ENCODE measurements at regions of chr3 and their contacts with region 1.

Region 1: DNA sequence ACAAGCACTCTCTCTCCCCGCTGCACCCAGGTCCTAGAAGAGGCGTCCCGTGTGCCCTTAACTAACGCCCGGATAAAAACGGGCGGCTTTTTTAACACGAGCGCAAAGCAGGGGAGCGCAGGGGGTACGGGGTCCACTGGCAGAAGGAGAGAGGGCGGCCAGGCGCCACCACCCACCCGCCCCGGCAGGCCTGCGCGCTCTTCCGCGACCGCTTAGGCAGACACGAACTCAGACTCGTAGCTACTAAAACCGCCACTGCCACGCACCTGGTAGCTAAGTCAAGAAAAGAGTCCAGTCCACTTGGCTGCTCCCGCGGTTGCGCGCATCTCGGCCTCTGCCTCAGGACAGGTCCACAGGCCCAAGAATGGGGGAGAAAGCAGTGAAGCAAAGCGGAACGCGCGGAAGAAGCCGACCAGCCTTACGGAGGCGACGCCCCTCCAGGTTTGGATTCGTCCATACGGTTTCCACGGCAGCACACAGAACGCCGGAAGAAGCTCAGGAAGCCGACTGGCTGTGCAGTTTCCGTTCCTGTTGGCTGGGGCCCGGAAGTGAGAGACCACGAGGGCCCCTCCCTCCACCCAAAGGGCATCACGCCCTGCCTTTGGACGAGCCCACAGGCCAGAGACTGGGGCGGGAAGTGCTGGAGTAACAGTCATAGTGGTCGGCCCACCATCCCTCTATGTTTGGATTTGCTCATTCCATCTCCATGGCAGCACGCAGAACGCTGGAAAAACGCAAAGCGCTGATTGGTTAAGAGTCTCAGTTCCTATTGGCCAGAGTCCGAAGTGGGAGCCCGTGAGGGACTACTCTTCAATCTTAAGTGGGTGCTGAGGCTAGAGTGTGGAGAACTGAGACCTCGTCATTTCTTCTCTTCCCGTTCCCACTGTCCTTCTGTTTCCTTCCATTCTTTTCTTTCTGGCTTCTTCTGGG is at the start of gene ULK4:
- DNase-seq: peak; percentile 87 to 99 (median 92)
- ATAC-seq: peak; percentile 83
- H3K4me3 ChIP-seq: peak within 1 kb of the TSS; percentile 100
- H3K4me3 Mint-ChIP-seq: peak within 1 kb of the TSS; percentile 100
- H3K27ac ChIP-seq: peak within 1 kb of the TSS; percentile 86 to 97
- H3K27ac Mint-ChIP-seq: peak within 1 kb of the TSS; percentile 98
- H3K4me1 ChIP-seq: peaks cover 19% of the 10 kb centered on the region
- H3K4me1 Mint-ChIP-seq: peaks cover 26% of the 10 kb centered on the region
- H3K27me3 ChIP-seq: no peaks in the 10 kb centered on the region
- H3K27me3 Mint-ChIP-seq: no peaks in the 10 kb centered on the region
- CTCF ChIP-seq: no peak
- total RNA-seq, gene ULK4: 23.8 to 28.6 TPM

Region 2: DNA sequence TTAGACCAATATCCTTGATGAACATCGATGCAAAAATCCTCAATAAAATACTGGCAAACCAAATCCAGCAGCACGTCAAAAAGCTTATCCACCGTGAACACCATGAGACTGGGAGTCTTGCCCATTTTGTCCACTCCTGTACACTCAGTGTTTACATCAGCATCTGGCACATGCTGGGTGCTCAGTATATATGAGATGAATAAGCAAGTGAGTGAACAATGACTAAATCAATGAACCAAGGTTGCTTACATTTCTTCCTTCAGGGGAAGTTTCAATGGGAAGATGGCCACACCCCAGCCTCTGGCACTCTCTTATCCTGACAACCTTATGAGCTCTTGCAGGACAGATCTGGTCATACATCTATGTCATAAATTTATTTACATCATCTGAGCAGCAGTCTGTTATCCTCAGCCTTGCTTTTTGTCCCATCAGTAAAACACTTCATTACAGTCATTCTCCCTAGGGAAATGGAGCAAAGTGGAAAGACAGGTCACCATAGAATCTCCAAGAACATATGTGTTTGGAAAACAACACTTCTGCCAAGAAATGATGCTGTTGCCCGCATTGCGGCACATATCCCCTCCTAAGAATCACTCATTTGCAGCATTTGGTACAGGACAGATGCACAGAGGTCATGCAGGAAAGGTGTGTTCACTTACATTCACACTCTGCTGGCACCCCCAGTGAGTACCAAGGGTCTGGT is 1824.3 kb before region 1 on chr3:
- CTCF ChIA-PET with region 1: no interaction called
- POLR2A ChIA-PET with region 1: no interaction called
- intact Hi-C with region 1: no loop called
- DNase-seq: no peak
- ATAC-seq: no peak
- H3K4me3 ChIP-seq: no peak overlapping the region
- H3K4me3 Mint-ChIP-seq: no peak overlapping the region
- H3K27ac ChIP-seq: no peak overlapping the region
- H3K27ac Mint-ChIP-seq: no peak overlapping the region
- H3K4me1 ChIP-seq: no peaks in the 10 kb centered on the region
- H3K4me1 Mint-ChIP-seq: no peaks in the 10 kb centered on the region
- H3K27me3 ChIP-seq: no peaks in the 10 kb centered on the region
- H3K27me3 Mint-ChIP-seq: peaks cover 13% of the 10 kb centered on the region
- CTCF ChIP-seq: no peak

Region 3: DNA sequence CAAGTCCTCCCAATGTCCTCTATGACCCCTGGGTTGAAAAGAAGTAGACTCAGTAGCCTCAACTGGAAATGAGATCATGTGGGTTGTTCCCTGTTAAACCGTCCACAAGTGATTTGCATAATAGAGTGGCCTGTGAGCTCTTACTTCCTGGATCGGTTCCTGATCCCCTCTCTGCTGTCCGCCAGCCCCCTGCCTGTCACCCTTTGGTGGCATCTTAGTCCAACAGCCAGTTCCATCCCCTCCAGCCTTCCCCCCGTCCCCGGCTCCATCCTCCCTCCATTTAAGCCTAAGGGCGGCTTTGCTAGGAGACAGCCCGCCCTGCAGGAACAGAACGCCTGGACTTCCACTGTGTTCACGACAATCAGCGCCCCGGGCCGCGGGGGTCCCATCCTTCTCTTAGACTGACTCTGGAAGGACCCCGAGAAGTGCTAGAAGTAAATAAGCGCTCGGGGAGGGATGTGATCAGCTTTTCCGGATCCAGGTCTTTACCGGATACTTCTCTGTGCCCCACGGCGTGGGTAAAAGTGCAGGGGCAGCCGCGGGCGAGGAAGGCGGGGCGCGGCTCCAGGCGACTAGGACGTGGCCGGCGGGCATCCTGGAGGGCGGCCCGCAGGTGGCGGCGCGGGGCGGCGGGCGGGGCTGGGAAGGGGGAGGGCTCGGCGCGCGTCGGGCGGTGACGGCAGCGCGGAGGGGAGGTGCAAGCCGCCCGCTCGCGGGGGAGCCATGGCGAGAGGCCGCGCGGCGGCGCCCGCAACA is 51.1 kb after region 1 on chr3:
- CTCF ChIA-PET with region 1: interaction called, 3 read pairs
- POLR2A ChIA-PET with region 1: interaction called, 20 read pairs
- intact Hi-C with region 1: loop called (anchors 1 to 2 kb)
- DNase-seq: peak; percentile 45 to 90 (median 68)
- ATAC-seq: peak; percentile 73
- H3K4me3 ChIP-seq: peak overlapping the region; percentile 78
- H3K4me3 Mint-ChIP-seq: peak overlapping the region; percentile 95
- H3K27ac ChIP-seq: peak overlapping the region; percentile 72 to 96
- H3K27ac Mint-ChIP-seq: peak overlapping the region; percentile 93
- H3K4me1 ChIP-seq: peaks cover 32% of the 10 kb centered on the region
- H3K4me1 Mint-ChIP-seq: peaks cover 38% of the 10 kb centered on the region
- H3K27me3 ChIP-seq: no peaks in the 10 kb centered on the region
- H3K27me3 Mint-ChIP-seq: no peaks in the 10 kb centered on the region
- CTCF ChIP-seq: no peak